GM12878 (cell line): ENCODE measurements at regions of chr19 and their contacts with region 1.

Region 1: DNA sequence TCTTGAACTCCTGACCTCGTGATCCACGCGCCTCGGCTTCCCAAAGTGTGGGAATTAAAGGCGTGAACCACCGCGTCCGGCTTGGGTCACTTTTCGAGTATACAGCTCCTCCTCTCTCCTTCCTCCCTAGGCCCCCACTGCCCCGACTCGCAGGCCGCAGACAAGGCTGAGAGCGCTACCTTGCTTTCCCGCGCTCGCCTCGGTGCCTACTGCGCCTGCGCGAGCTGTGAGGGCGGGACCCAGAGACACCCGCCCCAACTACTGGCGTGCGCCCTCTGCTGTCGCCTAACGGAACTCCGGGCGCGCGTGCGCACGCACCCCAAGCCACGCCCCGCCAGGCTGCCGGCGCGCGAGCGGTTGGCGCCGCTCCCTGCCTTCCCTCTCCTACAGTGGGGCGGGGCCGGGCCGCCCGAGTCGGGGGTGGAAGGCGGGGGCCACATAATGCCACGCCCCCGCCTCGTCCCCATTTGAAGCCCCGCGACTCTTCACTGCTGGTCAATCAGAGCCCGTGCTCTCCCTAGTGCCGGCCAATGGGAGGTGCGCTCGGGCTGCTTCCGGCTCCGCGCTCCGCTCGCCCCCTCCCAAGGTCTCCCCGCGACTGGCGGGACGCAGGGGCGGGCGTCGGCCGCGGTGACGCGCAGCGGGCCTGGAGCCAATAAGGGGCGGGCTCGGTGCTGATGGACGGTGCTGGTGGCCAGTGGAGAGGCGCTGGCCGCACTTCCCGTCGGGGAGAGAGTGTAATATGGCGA is at the start of gene RAB8A:
- DNase-seq: peak; percentile 96
- ATAC-seq: peak; percentile 93
- H3K4me3 ChIP-seq: peak within 1 kb of the TSS; percentile 100
- H3K27ac ChIP-seq: peak within 1 kb of the TSS; percentile 94
- H3K4me1 ChIP-seq: peaks cover 30% of the 10 kb centered on the region
- H3K27me3 ChIP-seq: no peaks in the 10 kb centered on the region
- CTCF ChIP-seq: peak; percentile 87 to 95 (median 93)
- EP300 ChIP-seq: no peak
- POLR2A ChIP-seq: no peak
- RAD21 ChIP-seq: peak; percentile 56
- polyA plus RNA-seq, gene RAB8A: 23.9 to 39.1 TPM

Region 2: DNA sequence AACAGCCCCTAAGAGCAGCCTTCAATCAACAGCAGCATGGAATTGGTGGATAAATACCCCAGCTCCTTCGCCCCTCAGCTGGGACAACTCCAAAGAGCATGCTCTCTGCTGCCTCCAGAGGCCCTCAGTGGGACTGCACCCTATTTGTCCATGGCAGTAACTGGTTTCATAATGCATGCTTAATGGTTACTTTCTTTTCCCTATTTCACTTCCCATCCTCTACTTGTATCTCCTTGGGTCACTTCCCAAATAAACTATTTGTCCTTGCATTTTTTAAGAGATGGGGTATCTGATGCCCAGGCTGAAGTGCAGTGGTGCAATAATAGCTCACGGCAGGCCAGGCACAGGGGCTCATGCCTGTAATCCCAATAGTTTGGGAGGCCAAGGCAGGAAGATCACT is 48.5 kb before region 1 on chr19:
- CTCF ChIA-PET with region 1: interaction called, 17 read pairs
- POLR2A ChIA-PET with region 1: interaction called, 4 read pairs
- RAD21 ChIA-PET with region 1: interaction called, 4 read pairs
- SMC1A ChIA-PET with region 1: interaction called, 3 read pairs
- in situ Hi-C with region 1: no loop called
- intact Hi-C with region 1: no loop called
- DNase-seq: no peak
- ATAC-seq: peak; percentile 77
- H3K4me3 ChIP-seq: no peak overlapping the region
- H3K27ac ChIP-seq: no peak overlapping the region
- H3K4me1 ChIP-seq: peaks cover 6% of the 10 kb centered on the region; the same call in 1 of the 2 replicates
- H3K27me3 ChIP-seq: no peaks in the 10 kb centered on the region
- CTCF ChIP-seq: peak; percentile 60 to 95 (median 91)
- EP300 ChIP-seq: no peak
- POLR2A ChIP-seq: no peak
- RAD21 ChIP-seq: peak; percentile 25

Region 3: GRCh38 chr19:16076154-16076957 is 35.0 kb before region 1 on chr19 and contains the start of gene TPM4:
- CTCF ChIA-PET with region 1: interaction called, 26 read pairs
- POLR2A ChIA-PET with region 1: interaction called, 10 read pairs
- RAD21 ChIA-PET with region 1: interaction called, 6 read pairs
- SMC1A ChIA-PET with region 1: interaction called, 9 read pairs
- in situ Hi-C with region 1: no loop called
- intact Hi-C with region 1: loop called (anchors 2 kb)
- DNase-seq: peak; percentile 74
- ATAC-seq: peak; percentile 66
- H3K4me3 ChIP-seq: peak within 1 kb of the TSS; percentile 92
- H3K27ac ChIP-seq: peak within 1 kb of the TSS; percentile 99
- H3K4me1 ChIP-seq: peaks cover 17% of the 10 kb centered on the region
- H3K27me3 ChIP-seq: no peaks in the 10 kb centered on the region
- CTCF ChIP-seq: no peak
- EP300 ChIP-seq: peak in 1 of 2 experiments; percentile 26; a peak in 2 of 4 replicates
- POLR2A ChIP-seq: peak; percentile 92
- RAD21 ChIP-seq: no peak
- polyA plus RNA-seq, gene TPM4: 183 to 194 TPM

Region 4: DNA sequence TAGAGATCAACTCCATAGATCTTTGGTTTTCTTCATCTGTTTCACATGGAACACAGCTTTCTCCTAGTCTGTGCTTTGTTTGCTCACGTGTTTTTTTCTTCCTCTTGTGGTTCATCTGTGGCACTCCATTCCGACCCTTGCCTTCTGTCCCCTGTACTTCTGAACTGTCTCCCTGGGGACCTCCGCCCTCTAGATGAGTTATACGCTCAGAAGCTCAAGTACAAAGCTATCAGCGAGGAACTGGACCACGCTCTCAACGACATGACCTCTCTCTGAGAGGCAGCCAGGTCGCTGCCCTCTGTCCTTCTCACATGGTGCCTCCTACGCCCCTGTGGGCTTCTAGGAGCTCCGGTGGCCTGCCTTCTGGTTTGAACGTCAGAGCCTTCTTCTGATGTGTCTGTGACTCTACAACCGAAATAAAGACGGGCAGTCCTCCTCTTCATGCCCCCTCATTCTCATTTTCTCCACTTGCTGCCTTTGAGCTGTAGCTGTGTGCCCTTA is 16.2 kb before region 1 on chr19:
- CTCF ChIA-PET with region 1: interaction called, 5 read pairs
- POLR2A ChIA-PET with region 1: interaction called, 10 read pairs
- RAD21 ChIA-PET with region 1: no interaction called
- SMC1A ChIA-PET with region 1: interaction called, 4 read pairs
- in situ Hi-C with region 1: no loop called
- intact Hi-C with region 1: no loop called
- DNase-seq: no peak
- ATAC-seq: peak; percentile 15
- H3K4me3 ChIP-seq: no peak overlapping the region
- H3K27ac ChIP-seq: no peak overlapping the region
- H3K4me1 ChIP-seq: no peaks in the 10 kb centered on the region
- H3K27me3 ChIP-seq: no peaks in the 10 kb centered on the region
- CTCF ChIP-seq: no peak
- EP300 ChIP-seq: no peak
- POLR2A ChIP-seq: peak; percentile 66
- RAD21 ChIP-seq: no peak

Region 5: GRCh38 chr19:16185123-16185767 is 73.9 kb after region 1 on chr19 and contains the start of gene FAM32A:
- CTCF ChIA-PET with region 1: interaction called, 59 read pairs
- POLR2A ChIA-PET with region 1: interaction called, 6 read pairs
- RAD21 ChIA-PET with region 1: interaction called, 21 read pairs
- SMC1A ChIA-PET with region 1: interaction called, 5 read pairs
- in situ Hi-C with region 1: no loop called
- intact Hi-C with region 1: loop called (anchors 2 kb)
- DNase-seq: peak; percentile 98
- ATAC-seq: peak; percentile 94
- H3K4me3 ChIP-seq: peak within 1 kb of the TSS; percentile 82
- H3K27ac ChIP-seq: peak within 1 kb of the TSS; percentile 70
- H3K4me1 ChIP-seq: peaks cover 2% of the 10 kb centered on the region; the same call in 1 of the 2 replicates
- H3K27me3 ChIP-seq: no peaks in the 10 kb centered on the region
- CTCF ChIP-seq: no peak
- EP300 ChIP-seq: no peak
- POLR2A ChIP-seq: peak; percentile 93
- RAD21 ChIP-seq: no peak
- polyA plus RNA-seq, gene FAM32A: 33.3 to 43.0 TPM

Region 6: GRCh38 chr19:16355293-16356043 is 244.1 kb after region 1 on chr19:
- CTCF ChIA-PET with region 1: no interaction called
- POLR2A ChIA-PET with region 1: no interaction called
- RAD21 ChIA-PET with region 1: no interaction called
- SMC1A ChIA-PET with region 1: no interaction called
- in situ Hi-C with region 1: no loop called
- intact Hi-C with region 1: no loop called
- DNase-seq: no peak
- ATAC-seq: peak; percentile 22; the same call in 1 of the 3 replicates
- H3K4me3 ChIP-seq: no peak overlapping the region
- H3K27ac ChIP-seq: no peak overlapping the region
- H3K4me1 ChIP-seq: peaks cover 14% of the 10 kb centered on the region; the same call in 1 of the 2 replicates
- H3K27me3 ChIP-seq: no peaks in the 10 kb centered on the region
- CTCF ChIP-seq: no peak
- EP300 ChIP-seq: no peak
- POLR2A ChIP-seq: no peak; the same call in 1 of the 2 replicates
- RAD21 ChIP-seq: no peak

Region 7: GRCh38 chr19:16429066-16429758 is 317.9 kb after region 1 on chr19:
- CTCF ChIA-PET with region 1: no interaction called
- POLR2A ChIA-PET with region 1: no interaction called
- RAD21 ChIA-PET with region 1: no interaction called
- SMC1A ChIA-PET with region 1: no interaction called
- in situ Hi-C with region 1: no loop called
- intact Hi-C with region 1: no loop called
- DNase-seq: no peak
- ATAC-seq: no peak
- H3K4me3 ChIP-seq: no peak overlapping the region
- H3K27ac ChIP-seq: no peak overlapping the region
- H3K4me1 ChIP-seq: no peaks in the 10 kb centered on the region
- H3K27me3 ChIP-seq: no peaks in the 10 kb centered on the region
- CTCF ChIP-seq: no peak
- EP300 ChIP-seq: no peak
- POLR2A ChIP-seq: 0 out of 2 replicates have a peak, but pooled peaks have one; percentile 17
- RAD21 ChIP-seq: no peak

Region 8: GRCh38 chr19:17658666-17659065 is 1547.3 kb after region 1 on chr19:
- CTCF ChIA-PET with region 1: no interaction called
- POLR2A ChIA-PET with region 1: no interaction called
- RAD21 ChIA-PET with region 1: no interaction called
- SMC1A ChIA-PET with region 1: no interaction called
- in situ Hi-C with region 1: no loop called
- intact Hi-C with region 1: no loop called
- DNase-seq: no peak
- ATAC-seq: no peak
- H3K4me3 ChIP-seq: no peak overlapping the region
- H3K27ac ChIP-seq: no peak overlapping the region
- H3K4me1 ChIP-seq: no peaks in the 10 kb centered on the region
- H3K27me3 ChIP-seq: no peaks in the 10 kb centered on the region
- CTCF ChIP-seq: no peak
- EP300 ChIP-seq: no peak
- POLR2A ChIP-seq: no peak
- RAD21 ChIP-seq: no peak